ENCODE measurements at regions of chr16 and their contacts with region 1.

Region 1: DNA sequence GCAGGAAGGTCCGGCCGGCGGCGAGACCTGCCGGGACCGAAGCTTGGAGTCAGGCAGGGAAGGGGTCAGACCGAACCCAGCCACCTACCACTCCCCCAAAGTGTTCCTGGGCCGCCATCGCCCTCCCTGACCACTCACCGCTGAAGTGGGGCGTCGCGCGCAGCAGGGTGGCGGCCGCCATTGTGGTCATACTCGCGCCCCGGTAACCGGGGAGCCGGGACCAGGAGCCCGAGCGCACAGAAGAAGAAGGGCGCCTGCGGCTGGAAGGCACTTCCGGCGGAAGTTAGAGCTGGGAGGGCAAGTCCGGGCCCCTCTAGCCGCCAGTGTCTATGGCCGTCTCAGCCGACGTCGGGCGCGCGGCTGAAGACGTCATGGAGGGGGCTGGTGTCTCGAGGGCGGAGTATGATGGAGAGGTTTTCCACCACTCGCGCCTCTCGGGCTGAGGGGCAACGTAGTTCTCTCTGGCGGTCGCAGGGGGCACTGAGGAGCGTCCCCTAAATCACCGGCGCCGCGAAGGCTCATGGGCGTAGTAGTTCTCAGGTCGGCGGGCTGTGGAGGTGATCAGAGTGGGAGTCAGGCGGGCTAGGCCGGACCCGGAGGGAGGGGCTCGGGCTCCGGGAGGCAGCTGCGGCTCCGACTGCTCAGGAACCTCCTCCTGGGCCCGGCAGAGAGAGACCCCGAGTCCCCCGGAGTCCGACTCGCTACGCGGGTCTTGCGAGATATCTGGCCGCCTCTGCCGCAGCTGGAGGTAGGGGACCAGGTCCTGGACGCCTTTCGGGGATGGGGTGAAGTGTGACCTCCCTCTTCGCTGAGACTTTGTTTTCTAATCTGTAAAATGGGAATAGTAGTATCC is at the start of gene TUFM:
- DNase-seq: peak; percentile 92 to 99 (median 98)
- ATAC-seq: peak; percentile 96
- H3K4me3 ChIP-seq: peak within 1 kb of the TSS; percentile 100
- H3K4me3 Mint-ChIP-seq: peak within 1 kb of the TSS; percentile 90
- H3K27ac ChIP-seq: peak within 1 kb of the TSS; percentile 84 to 85
- H3K27ac Mint-ChIP-seq: peak within 1 kb of the TSS; percentile 85
- H3K4me1 ChIP-seq: peaks cover 34% of the 10 kb centered on the region
- H3K4me1 Mint-ChIP-seq: peaks cover 24% of the 10 kb centered on the region
- H3K27me3 ChIP-seq: no peaks in the 10 kb centered on the region
- H3K27me3 Mint-ChIP-seq: no peaks in the 10 kb centered on the region
- CTCF ChIP-seq: peak; percentile 68
- total RNA-seq, gene TUFM: 102 to 103 TPM

Region 2: GRCh38 chr16:28491970-28492474 is 354.3 kb before region 1 on chr16 and contains the start of gene CLN3:
- CTCF ChIA-PET with region 1: no interaction called
- POLR2A ChIA-PET with region 1: no interaction called
- intact Hi-C with region 1: loop called in 1 of 2 experiments (anchors 10 kb)
- DNase-seq: peak; percentile 75 to 95 (median 82)
- ATAC-seq: peak; percentile 56
- H3K4me3 ChIP-seq: peak within 1 kb of the TSS; percentile 78
- H3K4me3 Mint-ChIP-seq: peak within 1 kb of the TSS; percentile 92
- H3K27ac ChIP-seq: peak within 1 kb of the TSS; percentile 90 to 97
- H3K27ac Mint-ChIP-seq: peak within 1 kb of the TSS; percentile 99
- H3K4me1 ChIP-seq: peaks cover 86% of the 10 kb centered on the region
- H3K4me1 Mint-ChIP-seq: peaks cover 65% of the 10 kb centered on the region
- H3K27me3 ChIP-seq: no peaks in the 10 kb centered on the region
- H3K27me3 Mint-ChIP-seq: no peaks in the 10 kb centered on the region
- CTCF ChIP-seq: no peak
- total RNA-seq, gene CLN3: 42.7 to 46.3 TPM

Region 3: DNA sequence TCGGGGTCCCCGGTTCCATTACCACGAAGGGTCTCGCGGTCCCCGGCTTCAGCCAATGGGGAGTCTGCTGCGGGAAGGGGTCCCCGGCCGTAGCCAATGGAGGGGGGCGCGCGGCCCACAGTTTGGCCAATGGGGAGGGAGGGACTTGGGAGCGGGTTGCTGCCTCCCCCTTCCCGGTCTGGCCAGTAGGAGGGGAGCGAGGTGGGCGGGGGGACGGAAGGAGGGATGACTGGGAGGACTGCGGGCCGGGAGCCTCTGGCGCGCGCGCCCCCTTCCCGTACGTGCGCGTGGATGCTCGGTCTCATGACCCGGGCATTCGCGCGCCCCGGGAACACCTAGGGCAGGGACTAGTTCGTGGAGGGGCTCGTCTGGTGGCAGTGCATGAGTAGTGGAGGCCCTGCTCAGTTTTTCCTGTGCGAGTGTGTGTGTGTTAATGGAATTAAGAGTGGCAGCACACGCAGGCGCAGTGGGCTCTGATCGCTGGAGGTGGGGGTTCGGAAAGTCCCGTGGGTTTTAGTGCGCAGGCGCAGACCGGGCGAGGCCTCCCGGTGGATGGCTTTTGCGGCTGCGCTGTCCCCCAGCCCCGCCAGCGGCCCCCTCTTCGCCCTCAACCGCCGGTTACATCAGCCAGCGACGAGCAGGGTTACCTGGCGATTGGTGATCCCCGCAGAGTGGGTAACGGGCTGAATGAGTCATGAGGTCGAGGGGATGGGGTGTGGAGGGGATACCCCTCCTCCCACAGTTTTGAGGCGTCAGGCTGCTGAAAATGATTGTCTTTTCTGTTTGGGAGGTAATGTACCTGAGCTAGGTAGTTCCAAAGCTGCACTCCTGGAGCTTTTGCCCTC is 22.2 kb before region 1 on chr16:
- CTCF ChIA-PET with region 1: interaction called, 6 read pairs
- POLR2A ChIA-PET with region 1: interaction called, 85 read pairs
- intact Hi-C with region 1: loop called (anchors 1 kb)
- DNase-seq: peak; percentile 88 to 98 (median 94)
- ATAC-seq: peak; percentile 60
- H3K4me3 ChIP-seq: peak overlapping the region; percentile 90
- H3K4me3 Mint-ChIP-seq: peak overlapping the region; percentile 100
- H3K27ac ChIP-seq: peak overlapping the region; percentile 95 to 98
- H3K27ac Mint-ChIP-seq: peak overlapping the region; percentile 99
- H3K4me1 ChIP-seq: peaks cover 31% of the 10 kb centered on the region
- H3K4me1 Mint-ChIP-seq: peaks cover 50% of the 10 kb centered on the region
- H3K27me3 ChIP-seq: no peaks in the 10 kb centered on the region
- H3K27me3 Mint-ChIP-seq: no peaks in the 10 kb centered on the region
- CTCF ChIP-seq: peak; percentile 13

Region 4: GRCh38 chr16:28863929-28864793 is 17.9 kb after region 1 on chr16:
- CTCF ChIA-PET with region 1: interaction called, 44 read pairs
- POLR2A ChIA-PET with region 1: interaction called, 118 read pairs
- intact Hi-C with region 1: loop called (anchors 1 kb)
- DNase-seq: peak in 5 of 14 experiments; percentile 12 to 69 (median 30)
- ATAC-seq: peak; percentile 2
- H3K4me3 ChIP-seq: peak overlapping the region; percentile 97
- H3K4me3 Mint-ChIP-seq: peak overlapping the region; percentile 95
- H3K27ac ChIP-seq: peak overlapping the region; percentile 90 to 96
- H3K27ac Mint-ChIP-seq: peak overlapping the region; percentile 95
- H3K4me1 ChIP-seq: peaks cover 19% of the 10 kb centered on the region
- H3K4me1 Mint-ChIP-seq: peaks cover 30% of the 10 kb centered on the region
- H3K27me3 ChIP-seq: no peaks in the 10 kb centered on the region
- H3K27me3 Mint-ChIP-seq: no peaks in the 10 kb centered on the region
- CTCF ChIP-seq: no peak

Region 5: DNA sequence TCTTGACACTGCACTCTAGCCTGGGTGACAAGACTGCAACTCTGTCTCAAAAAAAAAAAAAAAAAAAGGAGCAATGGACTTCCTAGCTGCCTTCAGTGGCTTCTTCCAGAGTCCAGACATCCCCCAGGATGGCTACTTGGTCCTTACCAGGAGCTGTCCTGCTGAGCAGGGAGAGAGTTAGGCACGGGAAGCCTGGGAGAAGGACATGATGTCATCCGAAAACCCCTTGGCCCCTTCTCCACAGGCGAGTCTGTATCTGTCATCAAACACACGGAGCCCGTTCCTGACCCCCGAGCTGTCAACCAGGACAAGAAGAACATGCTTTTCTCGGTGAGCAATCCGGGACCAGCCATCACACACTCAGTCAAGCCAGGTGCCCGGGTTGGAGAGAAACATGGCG is 40.6 kb after region 1 on chr16:
- CTCF ChIA-PET with region 1: no interaction called
- POLR2A ChIA-PET with region 1: no interaction called
- intact Hi-C with region 1: no loop called
- DNase-seq: no peak
- ATAC-seq: no peak
- H3K4me3 ChIP-seq: no peak overlapping the region
- H3K4me3 Mint-ChIP-seq: no peak overlapping the region
- H3K27ac ChIP-seq: no peak overlapping the region
- H3K27ac Mint-ChIP-seq: no peak overlapping the region
- H3K4me1 ChIP-seq: no peaks in the 10 kb centered on the region
- H3K4me1 Mint-ChIP-seq: no peaks in the 10 kb centered on the region
- H3K27me3 ChIP-seq: no peaks in the 10 kb centered on the region
- H3K27me3 Mint-ChIP-seq: no peaks in the 10 kb centered on the region
- CTCF ChIP-seq: no peak

Region 6: GRCh38 chr16:28943281-28943680 is 97.0 kb after region 1 on chr16:
- CTCF ChIA-PET with region 1: interaction called, 8 read pairs
- POLR2A ChIA-PET with region 1: interaction called, 3 read pairs
- intact Hi-C with region 1: loop called in 1 of 2 experiments (anchors 1 kb)
- DNase-seq: no peak
- ATAC-seq: no peak
- H3K4me3 ChIP-seq: no peak overlapping the region
- H3K4me3 Mint-ChIP-seq: no peak overlapping the region
- H3K27ac ChIP-seq: no peak overlapping the region
- H3K27ac Mint-ChIP-seq: no peak overlapping the region
- H3K4me1 ChIP-seq: peaks cover 8% of the 10 kb centered on the region
- H3K4me1 Mint-ChIP-seq: peaks cover 11% of the 10 kb centered on the region
- H3K27me3 ChIP-seq: no peaks in the 10 kb centered on the region
- H3K27me3 Mint-ChIP-seq: no peaks in the 10 kb centered on the region
- CTCF ChIP-seq: no peak